ENCODE measurements at regions of chr1 and their contacts with region 1.

Region 1: GRCh38 chr1:117758444-117759316 is 152.8 kb downstream of the TENT5C start:
- DNase-seq: peak; percentile 57 to 65 (median 63)
- H3K4me3 ChIP-seq: peak overlapping the region; percentile 3 to 42
- H3K4me3 Mint-ChIP-seq: peak overlapping the region; percentile 74 to 94 (median 87)
- H3K27ac ChIP-seq: no peak overlapping the region
- H3K27ac Mint-ChIP-seq: peak overlapping the region in 5 of 7 donors; percentile 5 to 85 (median 45)
- H3K4me1 ChIP-seq: peaks cover 8% of the 10 kb centered on the region
- H3K4me1 Mint-ChIP-seq: peaks cover 4 to 10% (median 7%) of the 10 kb centered on the region in 4 donors
- H3K27me3 ChIP-seq: peaks cover 5% of the 10 kb centered on the region
- H3K27me3 Mint-ChIP-seq: peaks cover 8 to 10% of the 10 kb centered on the region in 2 donors

Region 2: DNA sequence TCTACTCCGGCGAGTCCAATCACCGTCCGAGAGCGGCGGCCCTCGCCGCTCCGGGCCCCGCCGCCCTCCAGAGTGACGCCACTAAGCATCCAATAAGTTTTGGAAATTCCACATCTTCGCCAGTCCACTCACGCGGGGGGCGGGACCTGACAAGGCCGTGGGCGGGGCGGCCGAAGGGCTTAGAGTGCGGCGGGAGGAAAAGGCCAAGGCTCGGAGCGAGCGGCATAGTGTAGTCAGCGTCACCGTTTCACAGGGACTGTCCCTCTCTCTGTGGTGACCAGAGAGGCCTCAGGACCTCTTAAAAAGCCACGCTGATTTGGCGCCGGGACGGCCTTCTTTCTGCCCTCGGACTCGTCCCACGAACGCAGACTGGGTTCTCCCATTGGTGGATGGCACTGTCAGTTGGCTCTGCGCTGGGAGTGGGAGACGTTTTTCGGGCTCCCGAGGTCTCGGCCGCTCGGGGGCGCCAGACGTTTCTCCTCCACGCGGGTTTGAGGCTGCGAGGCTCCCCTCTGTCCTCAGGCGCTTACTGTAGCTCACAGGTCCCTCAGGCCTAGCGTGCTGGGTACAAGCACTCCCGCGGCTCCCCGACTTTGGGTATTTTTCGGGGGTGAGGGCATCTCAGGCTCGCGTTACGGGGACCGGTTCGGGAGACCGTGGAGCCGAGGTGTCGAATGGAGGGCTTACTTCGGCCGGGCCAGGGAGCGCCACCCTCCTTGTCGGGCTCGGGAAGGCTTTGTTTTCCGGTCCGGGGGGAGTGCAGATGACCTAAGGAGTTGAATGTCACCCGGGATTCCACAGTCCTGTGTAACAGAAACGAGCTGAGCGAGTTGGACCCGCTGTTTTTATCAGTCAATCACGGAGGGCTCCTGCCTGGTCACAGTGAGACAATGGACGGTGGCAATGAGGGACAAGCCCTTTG is 636.6 kb before region 1 on chr1:
- CTCF ChIA-PET with region 1: interaction called, 3 read pairs
- POLR2A ChIA-PET with region 1: no interaction called
- intact Hi-C with region 1: loop called (anchors 2 kb)
- DNase-seq: peak; percentile 79 to 83 (median 82)
- H3K4me3 ChIP-seq: peak overlapping the region; percentile 85 to 98
- H3K4me3 Mint-ChIP-seq: peak overlapping the region; percentile 87 to 92 (median 88)
- H3K27ac ChIP-seq: peak overlapping the region; percentile 53
- H3K27ac Mint-ChIP-seq: peak overlapping the region; percentile 7 to 87 (median 70)
- H3K4me1 ChIP-seq: peaks cover 15% of the 10 kb centered on the region
- H3K4me1 Mint-ChIP-seq: peaks cover 4 to 10% (median 8%) of the 10 kb centered on the region in 4 donors
- H3K27me3 ChIP-seq: no peaks in the 10 kb centered on the region
- H3K27me3 Mint-ChIP-seq: peaks cover 4 to 5% of the 10 kb centered on the region in 2 donors

Region 3: GRCh38 chr1:117447661-117448060 is 311.0 kb before region 1 on chr1:
- CTCF ChIA-PET with region 1: no interaction called
- POLR2A ChIA-PET with region 1: no interaction called
- intact Hi-C with region 1: no loop called
- DNase-seq: no peak
- H3K4me3 ChIP-seq: no peak overlapping the region
- H3K4me3 Mint-ChIP-seq: no peak overlapping the region
- H3K27ac ChIP-seq: no peak overlapping the region
- H3K27ac Mint-ChIP-seq: peak overlapping the region in 1 of 7 donors; percentile 46
- H3K4me1 ChIP-seq: no peaks in the 10 kb centered on the region
- H3K4me1 Mint-ChIP-seq: peaks cover 0 to 2% (median 0%) of the 10 kb centered on the region in 4 donors
- H3K27me3 ChIP-seq: no peaks in the 10 kb centered on the region
- H3K27me3 Mint-ChIP-seq: no peaks in the 10 kb centered on the region

Region 4: GRCh38 chr1:117501281-117501680 is 257.4 kb before region 1 on chr1:
- CTCF ChIA-PET with region 1: interaction called, 48 read pairs
- POLR2A ChIA-PET with region 1: no interaction called
- intact Hi-C with region 1: no loop called
- DNase-seq: no peak
- H3K4me3 ChIP-seq: no peak overlapping the region
- H3K4me3 Mint-ChIP-seq: no peak overlapping the region
- H3K27ac ChIP-seq: no peak overlapping the region
- H3K27ac Mint-ChIP-seq: no peak overlapping the region
- H3K4me1 ChIP-seq: no peaks in the 10 kb centered on the region
- H3K4me1 Mint-ChIP-seq: peaks cover 0 to 3% (median 0%) of the 10 kb centered on the region in 4 donors
- H3K27me3 ChIP-seq: no peaks in the 10 kb centered on the region
- H3K27me3 Mint-ChIP-seq: no peaks in the 10 kb centered on the region

Region 5: GRCh38 chr1:117534995-117535467 is 223.6 kb before region 1 on chr1:
- CTCF ChIA-PET with region 1: interaction called, 350 read pairs
- POLR2A ChIA-PET with region 1: interaction called, 7 read pairs
- intact Hi-C with region 1: loop called (anchors 1 kb)
- DNase-seq: peak; percentile 61 to 68 (median 66)
- H3K4me3 ChIP-seq: no peak overlapping the region
- H3K4me3 Mint-ChIP-seq: peak overlapping the region in 1 of 8 donors; percentile 21
- H3K27ac ChIP-seq: no peak overlapping the region
- H3K27ac Mint-ChIP-seq: peak overlapping the region in 3 of 7 donors; percentile 23 to 53 (median 27)
- H3K4me1 ChIP-seq: peaks cover 21% of the 10 kb centered on the region
- H3K4me1 Mint-ChIP-seq: peaks cover 0 to 6% (median 0%) of the 10 kb centered on the region in 4 donors
- H3K27me3 ChIP-seq: no peaks in the 10 kb centered on the region
- H3K27me3 Mint-ChIP-seq: no peaks in the 10 kb centered on the region

Region 6: DNA sequence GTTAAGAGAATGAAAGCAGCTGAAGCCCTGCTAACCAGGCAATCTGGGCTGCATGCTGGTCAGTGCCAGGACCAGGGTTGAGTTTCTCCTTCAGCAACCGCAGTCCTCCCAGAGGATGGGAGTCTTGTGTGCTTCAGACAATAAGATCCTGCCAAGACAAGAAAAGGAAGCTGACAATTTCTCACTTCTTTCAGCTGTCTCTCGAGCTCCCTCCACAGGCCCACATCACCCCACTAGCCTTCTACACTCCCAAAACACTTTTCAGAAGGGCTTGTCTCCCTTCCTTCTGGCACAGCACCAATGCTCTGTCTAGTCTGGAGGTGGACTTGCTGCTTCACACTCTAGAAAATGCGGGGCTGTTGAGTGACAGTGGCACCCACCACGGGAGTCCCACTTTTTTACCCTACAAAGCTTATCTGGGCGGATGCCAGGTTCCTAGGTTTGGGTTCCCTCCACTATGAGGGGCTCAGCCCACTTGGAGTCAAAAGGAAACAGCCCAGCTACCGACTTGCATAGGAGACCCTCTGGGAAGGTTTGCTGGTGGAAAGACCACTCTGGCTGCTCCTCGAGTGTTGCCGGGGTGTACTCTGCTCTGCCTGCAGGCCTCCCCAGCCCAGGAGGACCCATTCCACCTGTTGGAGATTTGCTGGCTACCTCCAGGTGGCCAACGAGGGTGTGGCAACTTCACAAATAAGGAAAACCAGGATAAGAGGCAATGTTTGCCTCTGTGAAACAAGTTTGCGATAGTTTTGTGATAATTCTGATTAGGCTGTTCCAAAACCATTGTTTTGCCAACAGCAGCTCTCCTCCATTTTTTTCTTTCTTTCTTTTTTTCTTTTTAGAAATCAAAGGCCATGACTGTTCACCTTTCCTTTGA is 83.9 kb before region 1 on chr1:
- CTCF ChIA-PET with region 1: interaction called, 179 read pairs
- POLR2A ChIA-PET with region 1: interaction called, 3 read pairs
- intact Hi-C with region 1: loop called (anchors 1 kb)
- DNase-seq: peak; percentile 64 to 72 (median 66)
- H3K4me3 ChIP-seq: no peak overlapping the region
- H3K4me3 Mint-ChIP-seq: no peak overlapping the region
- H3K27ac ChIP-seq: no peak overlapping the region
- H3K27ac Mint-ChIP-seq: peak overlapping the region in 6 of 7 donors; percentile 3 to 88 (median 74)
- H3K4me1 ChIP-seq: peaks cover 8% of the 10 kb centered on the region
- H3K4me1 Mint-ChIP-seq: peaks cover 5 to 9% (median 7%) of the 10 kb centered on the region in 4 donors
- H3K27me3 ChIP-seq: no peaks in the 10 kb centered on the region
- H3K27me3 Mint-ChIP-seq: peaks cover 0 to 2% of the 10 kb centered on the region in 2 donors

Region 7: GRCh38 chr1:117740496-117740895 is 18.2 kb before region 1 on chr1:
- CTCF ChIA-PET with region 1: interaction called, 64 read pairs
- POLR2A ChIA-PET with region 1: no interaction called
- intact Hi-C with region 1: no loop called
- DNase-seq: no peak
- H3K4me3 ChIP-seq: no peak overlapping the region
- H3K4me3 Mint-ChIP-seq: no peak overlapping the region
- H3K27ac ChIP-seq: no peak overlapping the region
- H3K27ac Mint-ChIP-seq: no peak overlapping the region
- H3K4me1 ChIP-seq: peaks cover 4% of the 10 kb centered on the region
- H3K4me1 Mint-ChIP-seq: peaks cover 0 to 11% (median 5%) of the 10 kb centered on the region in 4 donors
- H3K27me3 ChIP-seq: no peaks in the 10 kb centered on the region
- H3K27me3 Mint-ChIP-seq: peaks cover 0 to 2% of the 10 kb centered on the region in 2 donors

Region 8: GRCh38 chr1:117794073-117794472 is 35.4 kb after region 1 on chr1:
- CTCF ChIA-PET with region 1: no interaction called
- POLR2A ChIA-PET with region 1: no interaction called
- intact Hi-C with region 1: no loop called
- DNase-seq: no peak
- H3K4me3 ChIP-seq: no peak overlapping the region
- H3K4me3 Mint-ChIP-seq: no peak overlapping the region
- H3K27ac ChIP-seq: no peak overlapping the region
- H3K27ac Mint-ChIP-seq: no peak overlapping the region
- H3K4me1 ChIP-seq: no peaks in the 10 kb centered on the region
- H3K4me1 Mint-ChIP-seq: no peaks in the 10 kb centered on the region
- H3K27me3 ChIP-seq: no peaks in the 10 kb centered on the region
- H3K27me3 Mint-ChIP-seq: peaks cover 8 to 18% of the 10 kb centered on the region in 2 donors

Region 9: DNA sequence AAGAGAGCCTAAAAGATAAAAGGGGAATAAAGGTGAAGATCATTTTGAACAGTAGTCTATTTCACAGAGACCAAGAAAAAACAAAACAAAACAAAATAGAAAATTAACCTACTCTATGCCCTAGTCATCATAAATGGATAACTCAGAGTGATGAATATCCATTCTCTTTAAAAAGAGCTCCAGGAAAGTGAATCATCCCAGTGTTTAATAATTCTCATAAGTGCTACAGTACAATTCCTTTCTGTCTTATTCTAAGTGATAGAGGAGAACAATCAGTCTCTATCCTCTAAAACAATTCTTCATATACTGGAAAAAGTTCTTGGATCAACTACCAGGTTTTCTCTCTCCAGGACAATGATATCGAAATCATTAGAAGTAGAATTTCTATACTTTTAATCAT is 124.9 kb after region 1 on chr1:
- CTCF ChIA-PET with region 1: no interaction called
- POLR2A ChIA-PET with region 1: no interaction called
- intact Hi-C with region 1: no loop called
- DNase-seq: no peak
- H3K4me3 ChIP-seq: no peak overlapping the region
- H3K4me3 Mint-ChIP-seq: no peak overlapping the region
- H3K27ac ChIP-seq: no peak overlapping the region
- H3K27ac Mint-ChIP-seq: no peak overlapping the region
- H3K4me1 ChIP-seq: no peaks in the 10 kb centered on the region
- H3K4me1 Mint-ChIP-seq: peaks cover 0 to 2% (median 0%) of the 10 kb centered on the region in 4 donors
- H3K27me3 ChIP-seq: no peaks in the 10 kb centered on the region
- H3K27me3 Mint-ChIP-seq: no peaks in the 10 kb centered on the region

Region 10: DNA sequence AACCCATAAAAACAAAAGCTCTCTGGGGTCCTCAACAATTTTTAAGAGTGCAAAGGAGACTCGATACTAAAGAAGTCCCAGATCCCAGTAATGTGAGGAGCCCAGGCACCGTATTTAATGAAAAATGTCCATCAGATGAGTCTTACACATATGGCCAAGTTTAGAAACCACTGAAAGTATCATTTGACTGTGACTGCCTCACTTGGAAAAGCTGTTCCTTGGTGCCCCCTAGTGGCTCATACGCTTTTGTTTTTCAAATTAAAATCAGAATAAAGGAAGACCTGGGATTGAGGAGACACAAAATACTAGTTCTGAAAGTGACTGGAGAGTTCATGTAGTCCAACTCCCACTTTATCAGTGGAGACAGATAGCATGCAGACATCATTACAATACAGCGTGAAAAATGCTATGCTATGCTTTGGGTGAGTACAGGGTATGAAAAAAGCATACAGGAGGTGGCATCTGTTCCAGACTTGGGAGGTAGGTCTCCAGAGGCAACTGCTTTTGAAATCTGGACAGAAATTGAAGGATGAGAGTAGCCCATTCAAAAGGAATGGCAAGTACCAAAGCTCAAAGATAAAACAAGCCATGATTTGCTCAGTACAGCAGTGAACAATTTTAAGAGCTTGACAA is 136.9 kb after region 1 on chr1:
- CTCF ChIA-PET with region 1: interaction called, 10 read pairs
- POLR2A ChIA-PET with region 1: no interaction called
- intact Hi-C with region 1: loop called (anchors 5 kb)
- DNase-seq: peak; percentile 41 to 59 (median 51)
- H3K4me3 ChIP-seq: no peak overlapping the region
- H3K4me3 Mint-ChIP-seq: no peak overlapping the region
- H3K27ac ChIP-seq: no peak overlapping the region
- H3K27ac Mint-ChIP-seq: peak overlapping the region in 5 of 7 donors; percentile 3 to 66 (median 33)
- H3K4me1 ChIP-seq: no peaks in the 10 kb centered on the region
- H3K4me1 Mint-ChIP-seq: peaks cover 0 to 4% (median 1%) of the 10 kb centered on the region in 4 donors
- H3K27me3 ChIP-seq: no peaks in the 10 kb centered on the region
- H3K27me3 Mint-ChIP-seq: no peaks in the 10 kb centered on the region

Region 11: GRCh38 chr1:117959364-117959763 is 200.7 kb after region 1 on chr1:
- CTCF ChIA-PET with region 1: no interaction called
- POLR2A ChIA-PET with region 1: no interaction called
- intact Hi-C with region 1: no loop called
- DNase-seq: no peak
- H3K4me3 ChIP-seq: no peak overlapping the region
- H3K4me3 Mint-ChIP-seq: no peak overlapping the region
- H3K27ac ChIP-seq: no peak overlapping the region
- H3K27ac Mint-ChIP-seq: no peak overlapping the region
- H3K4me1 ChIP-seq: no peaks in the 10 kb centered on the region
- H3K4me1 Mint-ChIP-seq: no peaks in the 10 kb centered on the region
- H3K27me3 ChIP-seq: no peaks in the 10 kb centered on the region
- H3K27me3 Mint-ChIP-seq: no peaks in the 10 kb centered on the region

Measured in CD4-positive, alpha-beta memory T cell (primary cell).